ENCODE measurements at regions of chr6 and their contacts with region 1.

Region 1: DNA sequence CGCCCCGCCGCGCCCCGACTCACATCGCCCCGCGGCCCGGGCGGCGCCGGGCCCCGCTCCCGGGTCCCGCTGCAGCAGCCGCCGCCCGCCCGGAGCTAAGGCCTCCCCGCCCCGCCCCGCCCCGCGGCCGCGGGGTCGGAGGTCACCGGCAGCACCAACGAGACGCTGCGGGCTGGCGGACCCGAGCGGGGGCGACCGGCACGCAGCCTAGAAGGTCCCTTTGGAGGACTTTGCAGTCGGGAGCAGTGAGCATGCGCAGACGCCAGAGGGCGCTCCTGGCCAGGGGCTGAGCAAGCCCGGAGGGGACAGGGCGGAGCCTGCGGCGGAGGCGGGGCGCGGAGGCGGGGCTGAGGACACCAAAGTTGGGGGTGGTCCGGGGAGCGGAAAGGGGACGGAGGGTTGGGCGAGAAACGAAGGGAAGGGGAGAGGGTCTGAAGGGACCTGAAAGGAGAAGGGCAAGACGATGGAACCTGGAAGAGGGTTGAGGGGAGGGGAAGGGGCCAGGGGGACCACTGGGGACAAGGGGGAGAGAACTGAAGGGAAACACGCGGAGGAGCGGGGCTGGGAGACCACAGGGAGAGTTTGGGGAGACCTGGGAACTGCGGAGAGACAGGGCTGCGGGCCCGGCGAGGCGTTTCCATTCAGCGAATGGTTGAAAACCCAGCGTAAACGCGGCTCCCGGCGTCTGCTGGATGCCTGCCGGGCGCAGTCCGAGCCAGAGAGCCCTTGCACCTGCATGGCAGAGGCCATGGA is at the start of gene FRS3:
- DNase-seq: peak; percentile 98 to 100 (median 99)
- ATAC-seq: peak; percentile 92 to 95 (median 94)
- H3K4me3 ChIP-seq: peak within 1 kb of the TSS; percentile 61 to 96 (median 79)
- H3K27ac ChIP-seq: peak within 1 kb of the TSS; percentile 76 to 97 (median 91)
- H3K4me1 ChIP-seq: peaks cover 3 to 56% (median 26%) of the 10 kb centered on the region in 12 donors
- H3K27me3 ChIP-seq: no peaks in the 10 kb centered on the region
- CTCF ChIP-seq: peak; percentile 84 to 97 (median 91)
- POLR2A ChIP-seq: peak in 1 of 2 donors; percentile 36
- total RNA-seq, gene FRS3: 3.8 to 6.8 (median 5.1) TPM

Region 2: DNA sequence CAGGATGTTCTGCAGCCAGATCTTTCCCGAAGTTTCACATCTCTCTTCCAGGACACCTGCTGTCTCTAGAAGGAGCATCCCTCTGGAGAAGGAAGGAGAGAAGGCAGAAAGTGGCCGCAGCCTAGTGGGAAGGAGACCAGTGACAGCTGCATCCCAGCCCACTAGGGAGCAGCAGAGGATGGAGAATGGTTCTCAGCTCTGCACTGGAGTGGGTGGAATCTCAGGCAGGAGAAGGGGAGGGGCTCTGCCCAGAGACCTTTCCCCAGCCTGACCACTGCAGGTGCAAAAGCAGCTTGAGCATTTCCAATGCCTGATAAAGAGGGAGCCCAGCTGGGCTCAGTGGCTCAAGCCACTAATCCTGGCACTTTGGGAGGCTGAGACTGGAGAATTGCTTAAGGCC is 412.3 kb before region 1 on chr6:
- intact Hi-C with region 1: loop called in 5 of 10 experiments (anchors 2 to 10 kb)
- DNase-seq: peak in 4 of 5 donors; percentile 45 to 50 (median 48)
- ATAC-seq: peak; percentile 40 to 78 (median 76)
- H3K4me3 ChIP-seq: no peak overlapping the region
- H3K27ac ChIP-seq: no peak overlapping the region
- H3K4me1 ChIP-seq: peaks cover 0 to 23% (median 14%) of the 10 kb centered on the region in 12 donors
- H3K27me3 ChIP-seq: peaks cover 6 to 64% (median 29%) of the 10 kb centered on the region in 9 donors
- CTCF ChIP-seq: peak; percentile 23 to 74 (median 60)
- POLR2A ChIP-seq: no peak

Region 3: GRCh38 chr6:41689171-41690008 is 90.6 kb before region 1 on chr6:
- intact Hi-C with region 1: loop called in 2 of 10 experiments (anchors 5 to 10 kb)
- DNase-seq: no peak
- ATAC-seq: no peak
- H3K4me3 ChIP-seq: no peak overlapping the region
- H3K27ac ChIP-seq: peak overlapping the region in 2 of 12 donors; percentile 11 to 51
- H3K4me1 ChIP-seq: peaks cover 0 to 39% (median 14%) of the 10 kb centered on the region in 12 donors
- H3K27me3 ChIP-seq: no peaks in the 10 kb centered on the region
- CTCF ChIP-seq: no peak
- POLR2A ChIP-seq: no peak

Region 4: DNA sequence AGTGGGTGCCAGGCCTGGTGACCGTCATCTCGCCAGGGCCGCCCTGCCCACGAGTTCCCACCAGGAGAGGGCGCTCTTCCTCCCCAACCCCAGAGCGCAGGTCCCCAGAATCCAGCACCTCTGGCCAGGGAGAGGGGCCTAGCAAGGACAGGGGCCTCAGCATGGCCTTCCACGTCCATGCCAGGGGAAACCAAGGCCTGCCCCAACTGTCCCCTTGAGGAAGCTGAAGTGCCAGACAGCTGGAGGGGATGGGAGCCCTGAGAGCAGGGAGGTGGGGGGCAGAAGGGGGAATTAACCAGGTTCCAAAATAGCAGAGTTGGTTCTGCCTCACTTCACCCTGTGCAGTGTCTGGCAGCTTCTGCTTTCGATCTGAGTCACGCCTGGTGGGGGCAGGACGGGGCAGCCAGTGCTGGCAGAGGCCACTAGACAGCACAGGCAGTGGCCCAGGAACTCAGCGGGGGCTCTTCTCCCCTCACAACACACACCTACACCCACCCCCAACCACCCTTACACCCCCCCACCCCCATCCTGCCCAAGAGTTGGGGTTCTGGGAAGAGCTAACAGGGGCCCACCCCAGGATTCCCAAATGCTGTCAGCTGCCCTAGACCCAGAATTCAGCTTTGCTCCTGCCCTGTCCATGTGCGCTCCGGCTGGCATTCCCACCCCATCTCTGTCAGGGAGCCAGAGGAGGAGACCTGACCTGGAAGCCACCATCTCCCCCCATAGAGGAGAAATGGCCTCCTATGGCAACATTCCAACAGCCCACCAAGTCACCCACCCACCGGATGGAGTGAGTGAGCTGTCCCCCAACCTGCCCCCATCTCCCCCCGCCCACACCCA is 73.8 kb before region 1 on chr6:
- intact Hi-C with region 1: loop called in 2 of 10 experiments (anchors 10 kb)
- DNase-seq: peak; percentile 86 to 92 (median 87)
- ATAC-seq: peak; percentile 89 to 91 (median 90)
- H3K4me3 ChIP-seq: peak overlapping the region in 2 of 12 donors; percentile 23 to 44
- H3K27ac ChIP-seq: peak overlapping the region; percentile 64 to 92 (median 82)
- H3K4me1 ChIP-seq: peaks cover 10 to 89% (median 61%) of the 10 kb centered on the region in 12 donors
- H3K27me3 ChIP-seq: no peaks in the 10 kb centered on the region
- CTCF ChIP-seq: peak; percentile 54 to 84 (median 72)
- POLR2A ChIP-seq: peak in 1 of 2 donors; percentile 10

Region 5: GRCh38 chr6:41846666-41847237 is 66.8 kb after region 1 on chr6:
- intact Hi-C with region 1: loop called in 1 of 10 experiments (anchors 5 kb)
- DNase-seq: peak in 4 of 5 donors; percentile 43 to 70 (median 56)
- ATAC-seq: peak; percentile 87 to 98 (median 96)
- H3K4me3 ChIP-seq: no peak overlapping the region
- H3K27ac ChIP-seq: peak overlapping the region; percentile 2 to 68 (median 42)
- H3K4me1 ChIP-seq: peaks cover 0 to 15% (median 4%) of the 10 kb centered on the region in 12 donors
- H3K27me3 ChIP-seq: no peaks in the 10 kb centered on the region
- CTCF ChIP-seq: peak; percentile 67 to 88 (median 78)
- POLR2A ChIP-seq: no peak

Region 6: DNA sequence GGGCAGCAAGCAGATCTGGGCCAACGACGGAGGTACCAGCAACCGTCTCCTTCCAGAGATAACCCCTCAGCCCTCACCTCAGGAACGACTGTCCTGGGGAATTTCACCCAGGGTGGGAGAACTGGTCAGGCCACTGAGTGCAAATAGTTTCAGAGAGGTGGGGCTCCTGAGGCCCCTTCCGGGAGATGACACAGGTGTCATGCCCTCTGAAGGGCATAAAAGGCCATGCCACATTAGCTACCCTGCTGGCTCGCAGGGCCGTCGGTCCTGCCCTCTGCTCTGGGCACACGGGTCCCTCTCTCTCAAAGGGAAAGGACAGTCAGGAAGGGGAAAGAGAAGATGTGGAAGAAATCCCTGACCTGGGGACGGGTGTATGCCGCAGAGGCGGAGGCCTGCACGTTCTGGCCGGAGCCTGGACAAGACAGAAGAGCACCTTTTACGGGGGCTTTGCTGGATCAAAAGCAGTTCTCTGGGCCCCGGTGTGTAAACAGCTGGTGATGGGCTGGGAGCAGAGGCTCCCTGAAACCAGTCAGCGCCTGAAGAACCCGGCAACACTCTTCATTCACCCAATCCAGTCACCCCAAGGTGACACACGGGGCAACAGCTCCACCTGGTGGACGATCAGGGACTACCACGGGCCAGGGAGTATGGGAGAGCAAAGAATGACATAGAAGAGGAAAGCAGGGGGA is 264.0 kb after region 1 on chr6:
- intact Hi-C with region 1: loop called in 9 of 10 experiments (anchors 1 to 2 kb)
- DNase-seq: peak; percentile 87 to 92 (median 88)
- ATAC-seq: peak; percentile 52 to 80 (median 74)
- H3K4me3 ChIP-seq: peak overlapping the region in 4 of 12 donors; percentile 15 to 37 (median 20)
- H3K27ac ChIP-seq: peak overlapping the region in 10 of 12 donors; percentile 81 to 98 (median 94)
- H3K4me1 ChIP-seq: peaks cover 16 to 94% (median 59%) of the 10 kb centered on the region in 12 donors
- H3K27me3 ChIP-seq: no peaks in the 10 kb centered on the region
- CTCF ChIP-seq: peak; percentile 92 to 98 (median 97)
- POLR2A ChIP-seq: no peak

Region 7: GRCh38 chr6:42217519-42218367 is 437.8 kb after region 1 on chr6 and contains the start of gene MRPS10:
- intact Hi-C with region 1: loop called in 4 of 10 experiments (anchors 5 to 10 kb)
- DNase-seq: peak; percentile 93 to 94 (median 93)
- ATAC-seq: peak; percentile 99 to 100 (median 100)
- H3K4me3 ChIP-seq: peak within 1 kb of the TSS; percentile 49 to 90 (median 80)
- H3K27ac ChIP-seq: peak within 1 kb of the TSS; percentile 53 to 87 (median 80)
- H3K4me1 ChIP-seq: peaks cover 0 to 23% (median 12%) of the 10 kb centered on the region in 12 donors
- H3K27me3 ChIP-seq: no peaks in the 10 kb centered on the region
- CTCF ChIP-seq: peak in 1 of 12 donors; percentile 22
- POLR2A ChIP-seq: peak in 1 of 2 donors; percentile 62
- total RNA-seq, gene MRPS10: 47.5 to 73.5 (median 57.3) TPM